GM12878 (cell line): ENCODE measurements at regions of chr15 and their contacts with region 1.

Region 1: DNA sequence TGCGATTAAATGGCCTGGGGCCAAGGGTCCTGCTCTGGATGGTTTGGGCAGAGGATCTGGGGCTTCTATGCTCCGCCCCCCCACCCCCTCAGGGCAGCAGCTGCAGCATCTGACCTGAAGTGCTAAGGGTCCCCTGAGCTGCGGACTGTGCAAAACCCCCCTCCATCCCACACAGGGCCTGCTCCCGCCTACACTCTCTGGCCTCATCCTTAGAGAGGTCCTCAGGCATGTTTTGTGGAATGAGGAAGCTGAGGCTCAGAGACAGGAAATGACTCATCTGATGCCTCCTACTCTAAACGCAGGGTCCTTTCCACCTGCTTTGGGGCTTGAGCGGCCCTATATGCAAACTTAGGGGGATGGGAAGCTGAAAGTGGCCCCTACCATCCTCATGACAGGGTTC is 59.5 kb upstream of the CTSH start:
- DNase-seq: peak; percentile 86
- ATAC-seq: peak; percentile 87
- H3K4me3 ChIP-seq: peak overlapping the region; percentile 39; the same call in 1 of the 2 replicates
- H3K27ac ChIP-seq: peak overlapping the region; percentile 93
- H3K4me1 ChIP-seq: peaks cover 39% of the 10 kb centered on the region
- H3K27me3 ChIP-seq: no peaks in the 10 kb centered on the region
- CTCF ChIP-seq: no peak
- EP300 ChIP-seq: peak; percentile 74 to 95
- POLR2A ChIP-seq: 0 out of 2 replicates have a peak, but pooled peaks have one; percentile 28
- RAD21 ChIP-seq: peak; percentile 21; the same call in 1 of the 2 replicates

Region 2: GRCh38 chr15:78909791-78910228 is 94.5 kb before region 1 on chr15:
- CTCF ChIA-PET with region 1: interaction called, 90 read pairs
- POLR2A ChIA-PET with region 1: interaction called, 3 read pairs
- RAD21 ChIA-PET with region 1: interaction called, 13 read pairs
- SMC1A ChIA-PET with region 1: interaction called, 49 read pairs
- in situ Hi-C with region 1: no loop called
- intact Hi-C with region 1: no loop called
- DNase-seq: peak; percentile 26
- ATAC-seq: peak; percentile 87
- H3K4me3 ChIP-seq: no peak overlapping the region
- H3K27ac ChIP-seq: no peak overlapping the region
- H3K4me1 ChIP-seq: peaks cover 10% of the 10 kb centered on the region; the same call in 1 of the 2 replicates
- H3K27me3 ChIP-seq: no peaks in the 10 kb centered on the region
- CTCF ChIP-seq: peak; percentile 60 to 70 (median 69); a peak in 5 of 6 replicates
- EP300 ChIP-seq: no peak
- POLR2A ChIP-seq: peak; percentile 19; the same call in 1 of the 2 replicates
- RAD21 ChIP-seq: peak; percentile 79

Region 3: GRCh38 chr15:78938658-78939488 is 65.5 kb before region 1 on chr15:
- CTCF ChIA-PET with region 1: interaction called, 14 read pairs
- POLR2A ChIA-PET with region 1: interaction called, 15 read pairs
- RAD21 ChIA-PET with region 1: interaction called, 12 read pairs
- SMC1A ChIA-PET with region 1: interaction called, 17 read pairs
- in situ Hi-C with region 1: loop called (anchors 5 kb)
- intact Hi-C with region 1: loop called (anchors 2 kb)
- DNase-seq: peak; percentile 91
- ATAC-seq: peak; percentile 73
- H3K4me3 ChIP-seq: peak overlapping the region; percentile 60; the same call in 1 of the 2 replicates
- H3K27ac ChIP-seq: peak overlapping the region; percentile 91
- H3K4me1 ChIP-seq: peaks cover 28% of the 10 kb centered on the region
- H3K27me3 ChIP-seq: no peaks in the 10 kb centered on the region
- CTCF ChIP-seq: no peak
- EP300 ChIP-seq: peak; percentile 70 to 73; a peak in 3 of 4 replicates
- POLR2A ChIP-seq: no peak
- RAD21 ChIP-seq: peak; percentile 17; the same call in 1 of the 2 replicates

Region 4: DNA sequence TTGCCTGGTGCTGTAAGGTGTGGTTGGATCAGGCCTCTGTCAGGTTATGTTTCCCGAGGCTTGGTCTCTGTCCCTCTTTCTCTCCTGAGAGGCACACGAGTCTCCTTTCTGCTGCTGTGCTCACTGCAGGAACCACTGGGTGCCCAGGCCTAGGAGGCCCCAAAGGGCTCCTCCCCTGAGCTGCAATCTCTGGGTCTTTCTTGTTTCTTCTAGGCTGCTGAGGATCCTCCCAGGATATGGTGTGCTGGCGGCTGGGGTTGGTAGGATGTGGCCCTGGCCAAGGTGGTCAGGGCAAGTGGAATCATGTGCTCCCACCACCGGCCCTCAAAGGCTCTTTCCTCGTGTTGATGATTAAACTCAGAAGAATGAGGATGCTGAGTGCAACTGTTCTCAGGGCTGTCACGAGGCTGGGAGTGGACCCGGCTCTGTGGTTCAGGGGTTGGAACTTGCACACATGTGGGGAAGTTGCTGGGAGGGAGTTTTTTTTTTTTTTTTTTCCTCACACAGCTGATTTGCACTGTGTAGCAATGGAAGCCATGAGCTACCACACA is 15.9 kb before region 1 on chr15:
- CTCF ChIA-PET with region 1: interaction called, 105 read pairs
- POLR2A ChIA-PET with region 1: interaction called, 9 read pairs
- RAD21 ChIA-PET with region 1: interaction called, 13 read pairs
- SMC1A ChIA-PET with region 1: interaction called, 15 read pairs
- in situ Hi-C with region 1: no loop called
- intact Hi-C with region 1: no loop called
- DNase-seq: peak; percentile 63
- ATAC-seq: peak; percentile 81
- H3K4me3 ChIP-seq: no peak overlapping the region
- H3K27ac ChIP-seq: peak overlapping the region; percentile 33; the same call in 1 of the 2 replicates
- H3K4me1 ChIP-seq: peaks cover 26% of the 10 kb centered on the region
- H3K27me3 ChIP-seq: no peaks in the 10 kb centered on the region
- CTCF ChIP-seq: no peak
- EP300 ChIP-seq: no peak; a peak in 1 of 4 replicates
- POLR2A ChIP-seq: no peak
- RAD21 ChIP-seq: no peak

Region 5: GRCh38 chr15:79549196-79549595 is 544.9 kb after region 1 on chr15:
- CTCF ChIA-PET with region 1: no interaction called
- POLR2A ChIA-PET with region 1: no interaction called
- RAD21 ChIA-PET with region 1: no interaction called
- SMC1A ChIA-PET with region 1: no interaction called
- in situ Hi-C with region 1: no loop called
- intact Hi-C with region 1: no loop called
- DNase-seq: no peak
- ATAC-seq: no peak
- H3K4me3 ChIP-seq: no peak overlapping the region
- H3K27ac ChIP-seq: no peak overlapping the region
- H3K4me1 ChIP-seq: no peaks in the 10 kb centered on the region
- H3K27me3 ChIP-seq: peaks cover 0 to 2% of the 10 kb centered on the region in 2 experiments; a peak in 1 of 4 replicates
- CTCF ChIP-seq: no peak
- EP300 ChIP-seq: no peak
- POLR2A ChIP-seq: no peak
- RAD21 ChIP-seq: no peak